GM18951 (cell line): ENCODE measurements at regions of chr6 and their contacts with region 1.

Region 1: DNA sequence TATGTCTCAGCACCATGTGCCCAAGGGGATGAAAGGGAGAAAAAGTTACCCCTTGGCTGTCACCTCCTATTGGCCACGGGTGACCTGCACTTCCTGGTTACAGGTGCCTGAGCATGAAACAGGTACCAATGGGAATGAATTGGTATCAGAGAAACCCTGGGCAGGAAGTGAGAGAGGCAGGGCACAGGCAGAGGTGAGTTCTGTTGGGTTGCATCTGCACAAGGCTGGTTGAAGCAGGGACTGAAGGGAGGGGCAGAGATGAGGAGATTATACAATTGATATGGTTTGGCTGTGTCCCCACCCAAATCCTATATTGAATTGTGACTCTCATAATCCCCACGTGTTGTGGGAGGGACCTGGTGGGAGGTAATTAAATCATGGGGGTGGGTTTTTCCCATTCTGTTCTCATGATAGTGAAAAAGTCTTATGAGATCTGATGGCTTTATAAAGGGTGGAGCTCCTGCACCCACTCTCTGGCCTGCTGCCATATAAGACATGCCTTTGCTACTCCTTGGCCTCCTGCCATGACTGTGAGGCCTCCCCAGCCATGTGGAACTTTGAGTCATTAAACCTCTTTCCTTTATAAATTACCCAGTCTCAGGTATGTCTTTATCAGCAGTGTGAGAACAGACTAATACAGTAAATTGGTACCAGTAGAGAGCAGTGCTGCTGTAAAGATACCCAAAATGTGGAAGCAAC is 291.8 kb downstream of the LRFN2 start:
- POLR2A ChIP-seq: no peak

Region 2: DNA sequence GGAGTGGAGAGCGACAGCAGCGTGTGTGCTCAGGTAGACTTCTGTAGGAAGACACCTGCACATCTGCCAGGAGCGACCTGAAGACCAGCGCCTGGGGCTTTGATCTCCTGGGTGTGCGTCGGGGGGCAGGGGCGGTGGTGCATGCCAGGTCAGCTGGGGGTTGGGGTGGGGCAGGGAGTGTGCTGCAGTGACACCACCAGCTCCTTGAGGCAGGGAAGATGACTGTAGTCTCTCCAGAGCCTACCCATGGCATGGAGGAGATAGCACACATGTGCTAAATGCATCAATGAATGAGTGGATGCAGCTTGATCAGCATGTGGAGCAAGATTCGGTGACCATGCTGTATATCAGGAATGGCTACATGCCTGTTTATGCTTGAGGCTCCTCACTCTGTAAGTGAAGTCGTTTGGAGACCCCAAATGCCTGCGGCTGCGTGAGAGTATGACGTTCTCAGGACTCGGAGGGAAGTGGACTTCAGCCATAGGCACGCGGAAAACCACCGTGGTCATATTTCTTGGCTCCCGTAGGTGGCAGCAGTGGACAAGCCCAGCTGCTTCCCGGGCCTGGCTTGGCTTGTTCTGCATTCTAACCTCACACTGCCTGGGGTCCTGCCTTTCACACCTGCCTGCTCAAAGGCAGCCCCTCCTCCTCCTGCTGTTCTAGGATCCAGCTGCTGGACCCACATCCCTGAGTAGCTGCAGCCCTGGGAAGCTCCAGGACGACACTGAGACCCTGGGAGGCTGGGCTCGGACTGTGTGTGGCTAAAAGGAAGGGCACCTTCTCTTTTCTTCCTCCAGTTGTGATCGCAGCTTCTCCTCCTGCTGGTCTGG is 933.5 kb before region 1 on chr6:
- in situ Hi-C with region 1: loop called (anchors 25 kb)
- POLR2A ChIP-seq: no peak

Region 3: DNA sequence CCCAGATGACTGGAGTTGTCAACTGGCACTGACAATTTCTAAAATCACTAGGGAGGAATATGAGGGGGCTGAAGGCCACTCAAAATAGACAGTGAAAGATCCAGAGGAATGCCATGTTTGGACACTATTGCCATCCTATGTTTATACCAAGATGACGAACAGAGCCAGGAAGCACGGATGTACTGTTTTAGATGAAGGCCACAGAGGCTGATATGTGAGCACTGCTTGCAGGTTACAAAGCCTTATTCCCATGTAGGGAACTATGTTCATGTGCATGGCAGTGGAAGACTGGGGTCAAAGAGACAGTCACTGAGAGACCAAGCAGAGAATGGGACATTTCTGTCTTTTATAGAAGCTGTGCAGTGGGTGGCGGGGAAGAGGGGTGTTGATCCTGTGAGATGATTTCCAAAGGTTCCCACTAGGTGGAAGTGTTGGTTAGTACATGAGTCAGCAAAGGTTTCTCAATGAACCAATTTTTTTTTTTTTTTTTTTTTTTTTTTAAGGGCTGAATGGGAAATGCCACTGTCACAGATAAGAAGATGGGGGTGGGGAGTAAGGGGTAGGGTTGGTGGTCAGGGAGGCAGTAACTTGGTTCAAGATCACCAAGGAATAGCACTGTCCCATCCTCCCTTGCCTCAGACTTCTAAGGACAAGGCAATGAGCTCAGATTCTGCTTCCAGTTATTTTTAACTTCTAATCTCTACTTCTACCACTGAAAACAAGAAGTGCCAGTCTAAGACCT is 314.4 kb before region 1 on chr6:
- in situ Hi-C with region 1: loop called (anchors 25 kb)
- POLR2A ChIP-seq: no peak